Naive thymus-derived CD4-positive, alpha-beta T cell (primary cell): ENCODE measurements at regions of chr2 and their contacts with region 1.

Region 1: DNA sequence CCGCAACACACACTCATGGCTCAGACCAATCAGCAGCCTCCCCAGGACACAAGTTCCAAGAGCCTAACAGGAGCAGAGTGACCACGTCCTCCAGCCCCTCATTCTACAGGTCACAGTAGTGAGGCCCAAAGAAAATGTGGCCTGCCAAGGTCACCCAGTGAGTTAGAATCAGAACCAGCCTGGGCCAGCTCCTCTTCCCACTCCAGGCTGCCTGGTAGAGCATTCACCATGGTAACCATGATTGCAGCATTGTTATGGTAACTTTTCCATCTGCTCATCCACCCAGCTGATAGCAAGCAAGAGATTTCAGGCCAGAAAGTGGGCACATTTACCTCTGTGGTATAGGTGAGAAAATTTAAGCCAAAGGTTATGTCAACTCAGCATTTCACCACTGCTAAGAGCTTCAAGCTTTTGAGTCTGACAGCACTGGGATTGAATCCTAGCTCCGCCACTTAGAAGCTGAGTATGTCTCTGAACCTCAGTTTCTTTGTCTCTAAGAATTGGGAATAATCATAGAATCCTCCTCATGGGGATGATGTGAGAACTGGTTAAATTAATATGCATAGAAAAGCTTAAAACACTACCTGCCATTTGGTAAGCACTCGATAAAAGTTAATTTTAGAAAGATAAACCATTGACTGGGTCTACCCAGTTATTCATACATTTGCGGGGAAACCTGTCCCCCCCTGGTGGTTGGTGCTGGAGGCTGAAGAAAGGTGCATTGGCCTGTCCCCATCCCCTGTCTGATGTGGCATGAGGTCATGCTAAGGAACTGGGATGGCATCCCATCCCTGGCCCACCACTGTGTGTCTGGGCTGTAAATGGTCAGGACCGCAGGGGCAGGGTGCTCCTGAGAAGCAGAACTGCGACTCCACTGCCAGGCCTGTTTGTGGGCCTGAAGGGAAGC is 181.5 kb downstream of the KLHL29 start:
- DNase-seq: peak in 7 of 9 donors; percentile 7 to 46 (median 29)
- ATAC-seq: no peak
- H3K4me3 ChIP-seq: no peak overlapping the region
- H3K4me3 Mint-ChIP-seq: no peak overlapping the region
- H3K27ac ChIP-seq: no peak overlapping the region
- H3K27ac Mint-ChIP-seq: no peak overlapping the region
- H3K4me1 ChIP-seq: no peaks in the 10 kb centered on the region
- H3K4me1 Mint-ChIP-seq: peaks cover 0 to 3% (median 0%) of the 10 kb centered on the region in 7 donors
- H3K27me3 ChIP-seq: no peaks in the 10 kb centered on the region
- H3K27me3 Mint-ChIP-seq: no peaks in the 10 kb centered on the region

Region 2: DNA sequence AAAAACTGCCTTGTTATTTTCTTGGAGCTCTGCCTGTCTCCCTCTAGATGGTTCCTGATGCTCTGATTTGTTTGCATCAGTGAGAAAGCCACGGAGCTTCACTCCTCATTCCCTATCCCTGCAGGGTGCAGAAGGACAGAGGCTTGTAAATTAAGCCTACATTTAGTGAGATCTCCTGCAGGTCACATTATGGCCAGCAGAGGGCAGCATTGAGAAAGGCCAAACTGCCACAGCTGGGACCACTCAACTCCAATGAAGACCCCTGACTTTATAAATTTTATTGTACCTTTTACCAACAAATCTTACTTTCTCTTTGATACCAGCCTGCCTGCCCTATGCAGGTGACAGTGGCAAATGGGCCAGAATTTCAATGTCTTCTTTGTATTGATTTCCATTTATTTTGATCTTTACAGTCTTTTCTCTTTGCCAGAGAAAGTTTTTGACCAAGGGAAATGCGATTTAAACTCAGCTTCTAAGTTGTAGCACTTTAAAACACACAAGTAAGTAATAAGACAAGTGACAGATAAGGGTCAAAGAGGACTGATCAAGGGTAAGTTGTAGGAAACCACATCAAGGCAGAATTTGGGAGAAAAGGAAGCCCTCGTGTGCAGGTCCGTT is 1210.6 kb before region 1 on chr2:
- CTCF ChIA-PET with region 1: no interaction called
- POLR2A ChIA-PET with region 1: no interaction called
- intact Hi-C with region 1: loop called in 1 of 2 experiments (anchors 10 kb)
- DNase-seq: peak in 5 of 9 donors; percentile 1 to 42 (median 5)
- ATAC-seq: no peak
- H3K4me3 ChIP-seq: no peak overlapping the region
- H3K4me3 Mint-ChIP-seq: no peak overlapping the region
- H3K27ac ChIP-seq: no peak overlapping the region
- H3K27ac Mint-ChIP-seq: no peak overlapping the region
- H3K4me1 ChIP-seq: no peaks in the 10 kb centered on the region
- H3K4me1 Mint-ChIP-seq: no peaks in the 10 kb centered on the region
- H3K27me3 ChIP-seq: no peaks in the 10 kb centered on the region
- H3K27me3 Mint-ChIP-seq: no peaks in the 10 kb centered on the region

Region 3: GRCh38 chr2:23404426-23404825 is 162.1 kb before region 1 on chr2:
- CTCF ChIA-PET with region 1: interaction called, 3 read pairs
- POLR2A ChIA-PET with region 1: no interaction called
- intact Hi-C with region 1: loop called in 1 of 2 experiments (anchors 1 kb)
- DNase-seq: peak in 6 of 9 donors; percentile 23 to 41 (median 36)
- ATAC-seq: peak; percentile 53
- H3K4me3 ChIP-seq: no peak overlapping the region
- H3K4me3 Mint-ChIP-seq: peak overlapping the region in 7 of 10 donors; percentile 11 to 62 (median 52)
- H3K27ac ChIP-seq: no peak overlapping the region
- H3K27ac Mint-ChIP-seq: peak overlapping the region in 6 of 9 donors; percentile 5 to 92 (median 63)
- H3K4me1 ChIP-seq: peaks cover 0 to 9% of the 10 kb centered on the region in 2 donors
- H3K4me1 Mint-ChIP-seq: peaks cover 3 to 21% (median 17%) of the 10 kb centered on the region in 7 donors
- H3K27me3 ChIP-seq: no peaks in the 10 kb centered on the region
- H3K27me3 Mint-ChIP-seq: peaks cover 0 to 5% (median 0%) of the 10 kb centered on the region in 5 donors